Activated CD4-positive, alpha-beta memory T cell treated with anti-CD3 and anti-CD28 coated beads for 36 hours (primary cell): ENCODE measurements at regions of chr1 and their contacts with region 1.

Region 1: DNA sequence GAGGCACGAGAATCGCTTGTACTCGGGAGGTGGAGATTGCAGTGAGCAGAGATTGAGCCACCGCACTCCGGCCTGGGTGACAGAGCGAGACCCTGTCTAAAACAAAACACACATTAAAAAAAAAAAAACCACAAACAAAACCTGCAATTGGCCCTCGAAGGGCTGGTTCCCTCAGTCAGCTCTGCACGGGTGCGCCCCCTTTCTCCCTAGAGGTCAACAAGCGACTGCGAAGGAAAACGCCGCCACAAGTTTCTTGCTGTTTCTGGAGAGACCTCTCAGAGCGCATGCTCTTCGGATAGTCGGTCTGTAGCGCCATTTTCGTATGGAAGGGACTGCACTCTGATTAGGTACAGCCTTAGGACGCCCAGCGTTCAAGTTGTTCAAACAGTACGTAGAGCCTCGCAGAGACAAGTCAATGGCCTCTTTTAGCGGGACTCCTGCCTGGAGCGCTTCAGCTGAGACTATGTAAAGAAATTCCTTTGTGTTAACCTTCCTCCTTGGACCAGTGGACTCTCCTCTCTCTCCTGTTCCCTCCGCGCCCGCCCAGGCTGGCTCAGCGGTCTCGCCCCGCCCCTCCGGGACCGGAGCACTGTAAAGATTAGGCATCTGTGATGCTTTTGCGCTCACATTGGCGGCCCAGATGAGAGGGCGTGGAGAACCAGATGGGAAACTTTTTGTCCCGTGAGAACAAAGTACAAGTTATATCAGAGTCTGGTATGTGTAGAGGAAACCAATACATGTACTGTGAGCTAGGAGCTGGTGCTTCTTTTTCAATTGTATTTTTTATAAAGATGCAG is 1.0 kb upstream of the CDC14A start:
- DNase-seq: peak; percentile 94
- H3K4me3 Mint-ChIP-seq: peak overlapping the region; percentile 98
- H3K27ac Mint-ChIP-seq: peak overlapping the region; percentile 97
- H3K4me1 Mint-ChIP-seq: peaks cover 30% of the 10 kb centered on the region
- H3K27me3 Mint-ChIP-seq: no peaks in the 10 kb centered on the region

Region 2: DNA sequence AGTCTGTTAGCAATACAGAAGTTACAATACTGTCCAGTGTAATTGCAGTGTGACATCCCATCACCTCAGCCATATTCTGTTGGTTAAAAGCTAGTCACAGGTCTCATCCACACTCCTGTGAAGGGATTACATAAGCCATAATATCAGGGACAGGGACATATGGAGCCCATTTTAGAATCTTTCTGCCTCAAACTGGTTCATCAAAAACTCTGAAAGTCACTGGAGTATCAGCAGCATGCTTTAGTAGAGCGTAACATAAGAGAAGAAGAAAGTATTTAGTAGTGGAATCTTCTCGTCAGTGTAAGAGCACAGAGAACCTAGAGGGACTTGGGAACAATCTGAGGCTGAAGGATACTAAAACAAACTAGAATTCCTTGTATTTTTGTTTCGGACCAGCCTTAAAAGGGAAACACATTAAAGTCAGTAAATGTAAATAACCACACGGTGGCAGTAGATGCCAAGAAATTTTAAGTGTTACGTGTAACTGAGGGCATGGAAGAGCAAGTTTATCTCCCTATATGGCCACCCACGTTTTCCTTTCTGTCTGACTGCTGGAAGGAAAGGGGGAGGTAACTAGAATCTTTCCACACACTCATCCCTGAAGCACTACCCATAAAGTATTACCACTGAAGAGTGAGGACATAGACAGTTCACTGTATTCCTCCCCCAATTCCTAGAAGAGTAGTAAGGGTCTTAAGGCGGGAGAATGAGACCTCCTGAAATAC is 542.7 kb before region 1 on chr1:
- CTCF ChIA-PET with region 1: no interaction called
- POLR2A ChIA-PET with region 1: no interaction called
- intact Hi-C with region 1: loop called (anchors 2 kb)
- DNase-seq: peak; percentile 22
- H3K4me3 Mint-ChIP-seq: peak overlapping the region; percentile 43
- H3K27ac Mint-ChIP-seq: no peak overlapping the region
- H3K4me1 Mint-ChIP-seq: peaks cover 14% of the 10 kb centered on the region
- H3K27me3 Mint-ChIP-seq: peaks cover 14% of the 10 kb centered on the region

Region 3: GRCh38 chr1:100037927-100038659 is 313.2 kb before region 1 on chr1:
- CTCF ChIA-PET with region 1: no interaction called
- POLR2A ChIA-PET with region 1: interaction called, 5 read pairs
- intact Hi-C with region 1: loop called (anchors 1 kb)
- DNase-seq: peak; percentile 93
- H3K4me3 Mint-ChIP-seq: peak overlapping the region; percentile 97
- H3K27ac Mint-ChIP-seq: peak overlapping the region; percentile 100
- H3K4me1 Mint-ChIP-seq: peaks cover 54% of the 10 kb centered on the region
- H3K27me3 Mint-ChIP-seq: peaks cover 2% of the 10 kb centered on the region

Region 4: GRCh38 chr1:100184536-100184935 is 166.8 kb before region 1 on chr1:
- CTCF ChIA-PET with region 1: no interaction called
- POLR2A ChIA-PET with region 1: no interaction called
- intact Hi-C with region 1: no loop called
- DNase-seq: no peak
- H3K4me3 Mint-ChIP-seq: no peak overlapping the region
- H3K27ac Mint-ChIP-seq: no peak overlapping the region
- H3K4me1 Mint-ChIP-seq: no peaks in the 10 kb centered on the region
- H3K27me3 Mint-ChIP-seq: no peaks in the 10 kb centered on the region

Region 5: DNA sequence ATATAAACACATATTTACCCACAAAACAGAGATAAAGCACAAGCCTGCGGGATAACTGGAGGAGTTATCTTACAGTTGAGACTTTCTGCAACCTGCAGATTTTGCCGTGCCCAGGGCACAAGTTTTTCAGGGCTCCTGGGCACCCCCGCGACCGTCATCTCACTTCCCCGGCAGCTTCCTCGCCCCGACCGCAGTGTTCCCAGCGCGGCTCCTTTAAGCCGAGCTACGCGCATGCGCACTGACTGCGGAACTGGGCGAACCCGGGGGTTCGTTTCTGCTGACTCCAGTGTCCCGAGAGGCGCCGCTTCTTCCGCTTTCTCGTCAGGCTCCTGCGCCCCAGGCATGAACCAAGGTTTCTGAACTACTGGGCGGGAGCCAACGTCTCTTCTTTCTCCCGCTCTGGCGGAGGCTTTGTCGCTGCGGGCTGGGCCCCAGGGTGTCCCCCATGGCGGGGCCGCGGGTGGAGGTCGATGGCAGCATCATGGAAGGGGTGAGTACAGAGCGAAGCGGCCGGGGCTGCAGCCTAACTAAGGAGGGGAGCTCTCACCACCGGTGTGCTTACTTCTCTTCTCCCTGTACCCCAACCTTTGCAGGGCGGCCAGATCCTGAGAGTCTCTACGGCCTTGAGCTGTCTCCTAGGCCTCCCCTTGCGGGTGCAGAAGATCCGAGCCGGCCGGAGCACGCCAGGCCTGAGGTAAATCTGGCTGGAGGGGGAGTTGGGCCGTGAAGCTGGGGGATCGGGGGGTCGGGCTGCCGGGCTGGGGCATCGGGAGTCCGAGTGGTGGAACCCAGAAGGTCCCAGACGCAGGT is 85.2 kb before region 1 on chr1 and contains the start of gene RTCA:
- CTCF ChIA-PET with region 1: interaction called, 9 read pairs
- POLR2A ChIA-PET with region 1: interaction called, 18 read pairs
- intact Hi-C with region 1: loop called (anchors 1 kb)
- DNase-seq: peak; percentile 96
- H3K4me3 Mint-ChIP-seq: peak within 1 kb of the TSS; percentile 100
- H3K27ac Mint-ChIP-seq: peak within 1 kb of the TSS; percentile 97
- H3K4me1 Mint-ChIP-seq: peaks cover 40% of the 10 kb centered on the region
- H3K27me3 Mint-ChIP-seq: no peaks in the 10 kb centered on the region
- total RNA-seq, gene RTCA: 56.6 to 58.2 TPM

Region 6: DNA sequence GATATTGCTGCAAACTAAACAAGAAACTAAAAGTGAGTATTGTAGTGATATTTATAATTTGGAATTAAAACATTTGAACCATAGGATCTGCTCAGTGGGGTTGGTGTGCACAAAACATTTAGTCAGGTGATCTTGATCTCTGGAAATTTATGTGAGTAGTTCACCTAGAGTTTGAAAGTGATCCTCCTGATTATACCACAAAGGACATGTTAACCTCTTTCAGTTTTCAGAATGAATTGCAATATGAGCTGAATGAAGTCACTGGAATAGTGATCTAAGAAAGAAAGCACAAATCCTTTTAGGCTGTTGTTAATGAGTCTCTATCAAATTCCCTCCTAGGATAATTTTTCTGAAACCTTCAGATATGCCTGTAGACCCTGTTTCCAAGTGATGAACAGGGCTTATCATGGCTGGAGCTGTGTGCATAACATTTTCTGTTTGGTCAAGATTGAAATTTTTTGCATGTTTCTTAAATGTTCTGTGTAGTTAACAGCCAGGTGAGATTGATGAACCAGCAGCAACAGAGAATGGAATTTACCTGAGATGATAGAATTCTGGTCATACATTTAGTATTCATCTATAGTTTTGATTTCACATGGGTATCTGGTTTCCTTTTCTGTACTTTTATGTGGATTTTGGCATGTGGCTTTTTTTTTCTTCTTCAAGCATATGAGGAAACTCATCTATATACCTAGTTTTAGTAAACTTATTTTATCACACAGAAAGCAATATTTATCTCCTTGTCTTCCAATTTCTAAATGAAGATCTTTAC is 26.5 kb after region 1 on chr1:
- CTCF ChIA-PET with region 1: interaction called, 5 read pairs
- POLR2A ChIA-PET with region 1: interaction called, 6 read pairs
- intact Hi-C with region 1: loop called (anchors 1 kb)
- DNase-seq: no peak
- H3K4me3 Mint-ChIP-seq: no peak overlapping the region
- H3K27ac Mint-ChIP-seq: peak overlapping the region; percentile 85
- H3K4me1 Mint-ChIP-seq: peaks cover 71% of the 10 kb centered on the region
- H3K27me3 Mint-ChIP-seq: no peaks in the 10 kb centered on the region

Region 7: GRCh38 chr1:100443811-100444571 is 92.7 kb after region 1 on chr1:
- CTCF ChIA-PET with region 1: interaction called, 26 read pairs
- POLR2A ChIA-PET with region 1: interaction called, 45 read pairs
- intact Hi-C with region 1: loop called (anchors 1 kb)
- DNase-seq: peak; percentile 65
- H3K4me3 Mint-ChIP-seq: peak overlapping the region; percentile 82
- H3K27ac Mint-ChIP-seq: peak overlapping the region; percentile 98
- H3K4me1 Mint-ChIP-seq: peaks cover 84% of the 10 kb centered on the region
- H3K27me3 Mint-ChIP-seq: no peaks in the 10 kb centered on the region